ENCODE measurements at regions of chr17 and their contacts with region 1.

Region 1: GRCh38 chr17:31517524-31517923 is 126.0 kb downstream of the RAB11FIP4 start:
- DNase-seq: no peak
- ATAC-seq: peak; percentile 54

Region 2: DNA sequence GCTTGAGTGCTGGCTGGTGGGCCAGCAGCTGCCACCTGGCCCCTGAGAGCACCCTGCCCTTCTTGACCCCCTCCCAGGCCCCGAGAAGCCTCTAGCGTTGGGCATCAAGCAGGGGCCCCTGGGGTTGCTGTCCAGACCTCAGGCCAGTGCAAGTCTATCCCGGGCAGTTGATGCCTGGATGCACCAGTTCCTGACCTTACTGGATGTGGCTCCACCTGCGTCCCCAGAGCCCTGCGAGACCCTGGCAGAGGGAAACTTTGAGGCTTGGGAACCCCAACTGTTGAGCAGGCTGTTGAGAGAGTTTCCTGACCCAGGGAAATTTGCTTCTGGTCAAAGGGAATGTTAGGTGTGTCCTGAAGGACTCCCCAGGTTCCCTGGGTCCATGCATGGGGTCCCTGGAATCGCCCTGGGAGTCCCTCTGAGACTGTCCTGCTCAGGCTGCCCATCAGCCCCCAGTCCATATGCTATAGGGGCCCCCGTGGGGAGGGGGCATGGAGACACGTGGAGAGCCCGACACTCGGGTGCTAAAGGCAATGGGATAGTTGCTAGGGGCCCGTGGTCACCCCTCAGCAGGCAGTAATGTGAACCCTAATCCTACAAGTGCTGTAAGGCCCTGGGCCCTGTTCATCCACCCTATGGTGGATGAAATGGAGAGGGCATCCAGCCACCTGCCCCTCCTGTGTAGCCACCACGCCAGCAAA is 79.7 kb before region 1 on chr17:
- intact Hi-C with region 1: loop called (anchors 5 kb)
- DNase-seq: no peak
- ATAC-seq: no peak